Tibial artery (tissue), 4 donors: ENCODE measurements at regions of chr10 and their contacts with region 1.

Region 1: DNA sequence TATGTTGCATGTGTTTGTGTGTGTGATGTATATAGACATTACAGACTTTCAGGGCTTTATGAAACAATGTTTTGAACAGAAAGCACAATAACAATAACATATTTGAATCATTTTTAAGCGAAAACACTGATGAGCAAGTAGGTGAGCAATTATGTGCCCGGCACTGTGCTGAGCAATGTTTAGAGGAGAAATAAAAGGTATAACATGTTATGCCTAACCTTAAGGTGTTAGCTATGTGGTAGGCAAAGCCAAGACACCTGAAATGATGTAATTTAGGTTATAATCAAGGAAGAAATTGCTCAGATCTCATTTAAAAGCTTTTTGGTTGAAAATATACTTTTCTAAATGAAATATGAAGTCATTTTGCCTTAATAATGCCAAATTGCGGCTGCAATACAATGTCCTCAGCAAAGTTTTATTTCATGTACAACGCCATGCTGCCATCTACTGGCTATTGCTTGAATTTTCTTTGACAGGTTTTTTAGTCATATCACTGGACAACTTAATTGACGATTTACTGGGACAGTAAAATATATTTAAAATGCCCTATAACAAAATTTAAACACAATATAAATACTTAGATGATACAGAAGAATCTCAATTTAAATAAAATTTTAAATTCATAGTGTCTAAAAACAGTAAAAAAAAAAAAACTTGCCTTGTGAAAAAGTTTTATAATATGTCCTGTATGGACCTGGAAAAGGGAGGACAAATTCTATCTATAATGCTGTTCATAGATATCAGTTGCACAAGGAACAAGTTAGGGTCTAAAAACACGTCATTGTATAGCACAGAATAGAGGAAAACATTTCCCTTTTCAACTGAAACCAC is 131.1 kb upstream of the CDK1 start:
- DNase-seq: no peak
- H3K4me3 ChIP-seq: no peak overlapping the region
- H3K27ac ChIP-seq: no peak overlapping the region
- H3K4me1 ChIP-seq: no peaks in the 10 kb centered on the region
- H3K27me3 ChIP-seq: no peaks in the 10 kb centered on the region
- CTCF ChIP-seq: peak; percentile 69 to 84

Region 2: DNA sequence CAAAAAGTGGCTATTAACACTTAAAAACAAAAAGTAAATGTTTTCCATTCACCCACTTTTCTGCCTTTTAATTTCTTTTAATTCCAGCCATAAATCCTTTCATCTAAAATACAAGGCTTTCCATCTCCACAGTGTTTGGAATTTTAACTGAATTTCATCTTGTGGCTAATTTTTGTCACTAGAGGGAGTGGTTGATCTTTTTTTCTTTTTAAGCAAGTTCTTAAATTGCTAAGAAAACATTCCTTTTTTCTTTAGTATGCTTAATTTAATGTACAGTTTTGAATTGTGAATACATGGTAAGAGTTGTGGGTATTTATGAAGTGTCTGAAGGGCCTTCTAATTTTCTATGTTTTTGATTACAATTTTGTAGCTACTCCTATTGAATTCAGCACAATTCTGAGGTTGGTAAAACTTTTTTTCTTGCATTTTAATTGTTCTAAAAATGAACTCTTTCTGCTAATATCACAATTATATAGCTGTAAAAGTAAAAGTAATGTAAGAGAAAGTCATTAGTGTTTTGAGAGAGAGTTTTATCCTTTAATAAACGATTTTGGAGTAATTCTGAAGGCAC is 202.6 kb before region 1 on chr10:
- intact Hi-C with region 1: loop called (anchors 2 kb)
- DNase-seq: no peak
- H3K4me3 ChIP-seq: no peak overlapping the region
- H3K27ac ChIP-seq: peak overlapping the region in 1 of 2 donors; percentile 40
- H3K4me1 ChIP-seq: peaks cover 0 to 52% (median 22%) of the 10 kb centered on the region in 4 donors
- H3K27me3 ChIP-seq: no peaks in the 10 kb centered on the region
- CTCF ChIP-seq: peak; percentile 57 to 60

Region 3: GRCh38 chr10:60739581-60739980 is 92.4 kb after region 1 on chr10:
- intact Hi-C with region 1: no loop called
- DNase-seq: no peak
- H3K4me3 ChIP-seq: no peak overlapping the region
- H3K27ac ChIP-seq: no peak overlapping the region
- H3K4me1 ChIP-seq: no peaks in the 10 kb centered on the region
- H3K27me3 ChIP-seq: peaks cover 0 to 7% of the 10 kb centered on the region in 2 donors
- CTCF ChIP-seq: no peak

Region 4: GRCh38 chr10:61346796-61347413 is 699.7 kb after region 1 on chr10:
- intact Hi-C with region 1: no loop called
- DNase-seq: no peak
- H3K4me3 ChIP-seq: no peak overlapping the region
- H3K27ac ChIP-seq: no peak overlapping the region
- H3K4me1 ChIP-seq: no peaks in the 10 kb centered on the region
- H3K27me3 ChIP-seq: no peaks in the 10 kb centered on the region
- CTCF ChIP-seq: no peak